Naive thymus-derived CD4-positive, alpha-beta T cell (primary cell): ENCODE measurements at regions of chr4 and their contacts with region 1.

Region 1: GRCh38 chr4:145732895-145733880 is 53.2 kb downstream of the C4orf51 start:
- DNase-seq: peak; percentile 56 to 87 (median 68)
- ATAC-seq: peak; percentile 97
- H3K4me3 ChIP-seq: peak overlapping the region; percentile 59
- H3K4me3 Mint-ChIP-seq: peak overlapping the region; percentile 72 to 86 (median 82)
- H3K27ac ChIP-seq: peak overlapping the region; percentile 63
- H3K27ac Mint-ChIP-seq: peak overlapping the region in 5 of 9 donors; percentile 50 to 77 (median 62)
- H3K4me1 ChIP-seq: peaks cover 0 to 4% of the 10 kb centered on the region in 2 donors
- H3K4me1 Mint-ChIP-seq: peaks cover 0 to 13% (median 9%) of the 10 kb centered on the region in 7 donors
- H3K27me3 ChIP-seq: no peaks in the 10 kb centered on the region
- H3K27me3 Mint-ChIP-seq: peaks cover 0 to 11% (median 3%) of the 10 kb centered on the region in 5 donors

Region 2: GRCh38 chr4:145132511-145133098 is 600.6 kb before region 1 on chr4:
- CTCF ChIA-PET with region 1: no interaction called
- POLR2A ChIA-PET with region 1: no interaction called
- intact Hi-C with region 1: loop called in 1 of 2 experiments (anchors 2 kb)
- DNase-seq: no peak
- ATAC-seq: no peak
- H3K4me3 ChIP-seq: no peak overlapping the region
- H3K4me3 Mint-ChIP-seq: peak overlapping the region in 1 of 10 donors; percentile 52
- H3K27ac ChIP-seq: no peak overlapping the region
- H3K27ac Mint-ChIP-seq: peak overlapping the region; percentile 16 to 87 (median 61)
- H3K4me1 ChIP-seq: peaks cover 0 to 3% of the 10 kb centered on the region in 2 donors
- H3K4me1 Mint-ChIP-seq: peaks cover 9 to 75% (median 31%) of the 10 kb centered on the region in 7 donors
- H3K27me3 ChIP-seq: no peaks in the 10 kb centered on the region
- H3K27me3 Mint-ChIP-seq: no peaks in the 10 kb centered on the region

Region 3: GRCh38 chr4:145755802-145756201 is 22.6 kb after region 1 on chr4:
- CTCF ChIA-PET with region 1: no interaction called
- POLR2A ChIA-PET with region 1: no interaction called
- intact Hi-C with region 1: no loop called
- DNase-seq: no peak
- ATAC-seq: no peak
- H3K4me3 ChIP-seq: no peak overlapping the region
- H3K4me3 Mint-ChIP-seq: no peak overlapping the region
- H3K27ac ChIP-seq: no peak overlapping the region
- H3K27ac Mint-ChIP-seq: no peak overlapping the region
- H3K4me1 ChIP-seq: no peaks in the 10 kb centered on the region
- H3K4me1 Mint-ChIP-seq: peaks cover 0 to 17% (median 0%) of the 10 kb centered on the region in 7 donors
- H3K27me3 ChIP-seq: no peaks in the 10 kb centered on the region
- H3K27me3 Mint-ChIP-seq: peaks cover 0 to 20% (median 9%) of the 10 kb centered on the region in 5 donors

Region 4: GRCh38 chr4:145773581-145774234 is 40.5 kb after region 1 on chr4:
- CTCF ChIA-PET with region 1: no interaction called
- POLR2A ChIA-PET with region 1: no interaction called
- intact Hi-C with region 1: no loop called
- DNase-seq: no peak
- ATAC-seq: no peak
- H3K4me3 ChIP-seq: no peak overlapping the region
- H3K4me3 Mint-ChIP-seq: no peak overlapping the region
- H3K27ac ChIP-seq: no peak overlapping the region
- H3K27ac Mint-ChIP-seq: no peak overlapping the region
- H3K4me1 ChIP-seq: no peaks in the 10 kb centered on the region
- H3K4me1 Mint-ChIP-seq: peaks cover 0 to 6% (median 0%) of the 10 kb centered on the region in 7 donors
- H3K27me3 ChIP-seq: no peaks in the 10 kb centered on the region
- H3K27me3 Mint-ChIP-seq: no peaks in the 10 kb centered on the region

Region 5: GRCh38 chr4:145829629-145830395 is 96.6 kb after region 1 on chr4:
- CTCF ChIA-PET with region 1: interaction called, 3 read pairs
- POLR2A ChIA-PET with region 1: no interaction called
- intact Hi-C with region 1: loop called in 1 of 2 experiments (anchors 5 kb)
- DNase-seq: peak in 1 of 9 donors; percentile 58
- ATAC-seq: no peak
- H3K4me3 ChIP-seq: peak overlapping the region; percentile 1
- H3K4me3 Mint-ChIP-seq: peak overlapping the region in 9 of 10 donors; percentile 43 to 83 (median 67)
- H3K27ac ChIP-seq: peak overlapping the region; percentile 40
- H3K27ac Mint-ChIP-seq: peak overlapping the region; percentile 25 to 92 (median 80)
- H3K4me1 ChIP-seq: peaks cover 8 to 9% of the 10 kb centered on the region in 2 donors
- H3K4me1 Mint-ChIP-seq: peaks cover 6 to 39% (median 31%) of the 10 kb centered on the region in 7 donors
- H3K27me3 ChIP-seq: no peaks in the 10 kb centered on the region
- H3K27me3 Mint-ChIP-seq: no peaks in the 10 kb centered on the region

Region 6: GRCh38 chr4:146165840-146166239 is 432.7 kb after region 1 on chr4:
- CTCF ChIA-PET with region 1: no interaction called
- POLR2A ChIA-PET with region 1: no interaction called
- intact Hi-C with region 1: no loop called
- DNase-seq: no peak
- ATAC-seq: no peak
- H3K4me3 ChIP-seq: no peak overlapping the region
- H3K4me3 Mint-ChIP-seq: no peak overlapping the region
- H3K27ac ChIP-seq: no peak overlapping the region
- H3K27ac Mint-ChIP-seq: no peak overlapping the region
- H3K4me1 ChIP-seq: no peaks in the 10 kb centered on the region
- H3K4me1 Mint-ChIP-seq: no peaks in the 10 kb centered on the region
- H3K27me3 ChIP-seq: peaks cover 0 to 4% of the 10 kb centered on the region in 2 donors
- H3K27me3 Mint-ChIP-seq: peaks cover 0 to 16% (median 0%) of the 10 kb centered on the region in 5 donors

Region 7: GRCh38 chr4:146945556-146946374 is 1212.6 kb after region 1 on chr4 and contains the start of gene TTC29:
- CTCF ChIA-PET with region 1: no interaction called
- POLR2A ChIA-PET with region 1: no interaction called
- intact Hi-C with region 1: loop called in 1 of 2 experiments (anchors 10 kb)
- DNase-seq: peak; percentile 63 to 86 (median 82)
- ATAC-seq: peak; percentile 99
- H3K4me3 ChIP-seq: peak within 1 kb of the TSS; percentile 52
- H3K4me3 Mint-ChIP-seq: peak within 1 kb of the TSS; percentile 78 to 96 (median 85)
- H3K27ac ChIP-seq: no peak within 1 kb of the TSS
- H3K27ac Mint-ChIP-seq: peak within 1 kb of the TSS in 7 of 9 donors; percentile 28 to 79 (median 59)
- H3K4me1 ChIP-seq: peaks cover 15 to 18% of the 10 kb centered on the region in 2 donors
- H3K4me1 Mint-ChIP-seq: peaks cover 9 to 38% (median 32%) of the 10 kb centered on the region in 7 donors
- H3K27me3 ChIP-seq: no peaks in the 10 kb centered on the region
- H3K27me3 Mint-ChIP-seq: peaks cover 7 to 64% (median 18%) of the 10 kb centered on the region in 5 donors
- total RNA-seq, gene TTC29: not detected